ENCODE measurements at regions of chr12 and their contacts with region 1.

Region 1: DNA sequence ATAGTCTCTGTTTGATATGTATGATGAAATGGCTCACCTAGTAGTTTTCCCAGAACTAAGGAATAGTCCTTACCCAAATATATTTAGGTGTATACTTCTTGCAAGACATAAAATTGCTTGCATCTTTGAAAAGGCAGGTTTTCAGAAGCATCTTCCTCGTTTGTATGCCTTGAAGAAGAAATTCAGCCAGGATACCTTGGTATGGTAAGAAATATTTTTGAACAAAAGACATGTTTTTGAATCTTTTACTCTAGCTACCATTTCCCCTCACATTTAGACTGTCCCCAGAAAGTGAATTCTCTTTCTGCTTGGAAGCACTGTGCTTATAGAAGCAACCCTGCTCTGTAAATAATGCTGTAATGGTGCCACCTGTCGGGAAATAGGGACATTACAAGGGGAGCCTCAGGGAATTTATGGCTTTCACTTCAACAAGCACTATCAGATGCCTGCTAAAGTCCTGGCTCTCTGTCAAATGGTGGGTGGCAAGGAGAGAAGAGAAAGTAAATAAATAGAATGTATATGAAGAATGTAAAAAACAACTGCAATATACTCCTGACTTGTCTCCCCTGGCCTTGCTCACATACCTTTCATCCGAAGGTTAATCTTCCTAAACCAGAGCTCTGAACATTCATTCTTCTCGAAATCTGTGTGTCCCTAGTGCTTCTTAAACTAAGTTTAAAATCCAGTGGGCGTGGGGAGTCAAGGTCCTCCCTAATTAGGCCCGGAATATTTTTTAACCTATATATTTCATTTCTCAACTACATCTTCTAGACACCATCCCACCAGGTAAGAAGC is 6.1 kb downstream of the CCDC184 start:
- DNase-seq: peak; percentile 66
- H3K4me3 ChIP-seq: no peak overlapping the region; a peak in 1 of 4 replicates
- H3K27ac ChIP-seq: no peak overlapping the region
- H3K4me1 ChIP-seq: peaks cover 14 to 27% of the 10 kb centered on the region in 2 experiments
- H3K27me3 ChIP-seq: no peaks in the 10 kb centered on the region
- CTCF ChIP-seq: peak; percentile 86
- EP300 ChIP-seq: no peak
- RAD21 ChIP-seq: peak; percentile 87

Region 2: GRCh38 chr12:48084066-48084465 is 105.5 kb before region 1 on chr12:
- CTCF ChIA-PET with region 1: interaction called, 13 read pairs
- POLR2A ChIA-PET with region 1: no interaction called
- DNase-seq: peak; percentile 14
- H3K4me3 ChIP-seq: no peak overlapping the region
- H3K27ac ChIP-seq: no peak overlapping the region
- H3K4me1 ChIP-seq: no peaks in the 10 kb centered on the region
- H3K27me3 ChIP-seq: no peaks in the 10 kb centered on the region
- CTCF ChIP-seq: peak; percentile 59
- EP300 ChIP-seq: no peak
- RAD21 ChIP-seq: peak; percentile 63

Region 3: GRCh38 chr12:48104565-48104964 is 85.0 kb before region 1 on chr12:
- CTCF ChIA-PET with region 1: interaction called, 10 read pairs
- POLR2A ChIA-PET with region 1: no interaction called
- DNase-seq: no peak
- H3K4me3 ChIP-seq: peak overlapping the region; percentile 85 to 98
- H3K27ac ChIP-seq: no peak overlapping the region; a peak in 2 of 4 replicates
- H3K4me1 ChIP-seq: peaks cover 10 to 13% of the 10 kb centered on the region in 2 experiments; a peak in 3 of 4 replicates
- H3K27me3 ChIP-seq: no peaks in the 10 kb centered on the region
- CTCF ChIP-seq: no peak
- EP300 ChIP-seq: no peak
- RAD21 ChIP-seq: no peak

Region 4: DNA sequence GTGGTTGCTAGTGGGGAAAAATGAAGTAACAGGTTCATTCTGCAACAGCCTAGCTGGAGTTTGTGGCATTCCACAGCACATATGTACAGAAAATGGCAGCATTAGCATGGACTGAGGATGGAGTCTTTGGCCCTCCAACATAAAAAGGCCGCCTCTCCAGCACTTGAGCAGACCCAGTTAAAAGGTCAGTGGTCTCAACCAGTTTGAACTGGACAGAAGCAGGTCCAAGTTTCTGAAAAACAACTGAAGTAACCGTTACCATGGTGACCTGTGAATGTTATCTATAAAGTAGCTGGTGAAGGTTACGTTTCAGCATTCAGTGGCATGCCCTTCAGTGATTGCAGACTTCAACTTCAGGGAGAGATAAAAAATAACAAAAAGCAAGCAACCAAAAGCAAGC is 47.6 kb after region 1 on chr12:
- CTCF ChIA-PET with region 1: no interaction called
- POLR2A ChIA-PET with region 1: no interaction called
- DNase-seq: no peak
- H3K4me3 ChIP-seq: no peak overlapping the region
- H3K27ac ChIP-seq: no peak overlapping the region
- H3K4me1 ChIP-seq: no peaks in the 10 kb centered on the region
- H3K27me3 ChIP-seq: no peaks in the 10 kb centered on the region
- CTCF ChIP-seq: no peak
- EP300 ChIP-seq: no peak
- RAD21 ChIP-seq: no peak

Measured in SK-N-SH (cell line).